Natural killer cell (primary cell): ENCODE measurements at regions of chr17 and their contacts with region 1.

Region 1: DNA sequence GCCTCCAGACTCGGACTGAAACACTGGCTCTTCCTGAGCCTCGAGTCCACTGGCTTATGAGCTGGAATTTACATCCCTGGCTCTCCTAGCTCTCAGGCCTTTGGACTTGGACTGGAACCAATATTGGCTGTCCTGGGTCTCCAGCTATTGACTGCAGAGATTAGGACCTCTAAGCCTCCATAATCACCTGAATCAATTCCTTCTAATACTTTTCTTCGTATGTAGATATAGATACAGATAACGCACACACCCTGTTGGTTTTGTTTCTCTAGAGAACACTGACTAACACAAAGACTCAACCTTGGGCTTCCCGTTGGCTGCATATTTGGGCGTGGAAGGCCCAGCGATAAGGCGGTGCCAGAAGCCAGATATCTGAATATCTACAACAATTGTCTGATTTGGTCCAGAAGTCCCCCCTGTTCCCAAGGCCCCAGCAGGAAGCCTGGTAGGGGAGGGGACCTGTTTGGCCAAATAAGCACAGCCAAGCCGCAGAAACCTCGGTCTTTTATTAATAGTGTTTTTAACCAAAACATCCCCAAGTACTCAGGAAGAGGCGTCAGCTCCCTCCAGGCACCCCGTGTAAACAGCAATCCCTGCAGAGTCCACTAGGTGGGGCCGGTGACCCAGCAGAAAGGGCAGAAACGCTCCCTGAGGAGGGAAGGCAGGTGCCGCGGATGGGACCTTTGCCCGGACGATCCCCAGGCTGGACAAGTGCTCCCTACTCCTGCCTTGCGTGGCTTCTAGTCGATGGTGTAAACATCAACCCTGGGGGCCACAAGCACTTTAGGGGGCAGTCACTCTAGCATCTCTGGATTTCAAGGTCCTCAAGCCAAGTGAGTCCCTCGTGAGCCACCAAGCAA is 57.0 kb downstream of the ABR start:
- DNase-seq: peak; percentile 83 to 86
- ATAC-seq: peak; percentile 31 to 65 (median 46)
- H3K4me3 ChIP-seq: no peak overlapping the region
- H3K4me3 Mint-ChIP-seq: peak overlapping the region; percentile 56
- H3K27ac ChIP-seq: peak overlapping the region; percentile 10
- H3K27ac Mint-ChIP-seq: peak overlapping the region; percentile 95 to 96
- H3K4me1 ChIP-seq: peaks cover 43% of the 10 kb centered on the region
- H3K4me1 Mint-ChIP-seq: peaks cover 35 to 37% of the 10 kb centered on the region in 2 donors
- H3K27me3 ChIP-seq: no peaks in the 10 kb centered on the region
- H3K27me3 Mint-ChIP-seq: peaks cover 0 to 4% of the 10 kb centered on the region in 2 donors
- CTCF ChIP-seq: peak; percentile 83

Region 2: DNA sequence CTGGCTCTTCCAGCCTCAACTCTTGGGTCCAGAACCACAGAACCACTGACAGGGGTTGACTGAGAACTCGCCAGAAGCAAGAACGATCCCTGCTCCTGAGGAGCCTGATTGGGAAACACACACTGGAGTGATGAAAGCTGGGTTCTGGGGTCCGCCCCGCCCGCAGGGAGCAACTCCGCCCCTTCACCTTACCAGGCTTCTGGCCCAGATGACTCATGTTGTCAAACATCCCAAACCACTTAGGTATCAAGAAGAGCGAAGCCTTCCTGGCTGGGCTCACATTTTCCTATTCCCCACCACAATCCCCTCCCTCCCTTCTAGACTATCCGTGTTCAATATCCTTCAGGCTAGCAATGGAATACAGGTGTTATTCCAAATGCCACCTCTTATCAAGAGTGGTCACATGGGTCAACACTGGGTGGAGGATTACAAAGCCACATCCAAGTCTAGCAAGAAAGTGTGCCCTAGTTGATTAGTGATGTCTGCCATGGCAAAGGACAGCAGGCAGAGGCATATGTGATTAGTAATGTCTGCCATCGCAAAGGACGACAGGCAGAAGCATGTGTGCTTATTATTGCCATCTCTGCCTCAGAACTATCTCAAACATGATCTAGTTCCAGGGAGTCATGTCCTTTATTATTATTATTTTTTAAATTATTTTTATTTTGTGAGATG is 55.3 kb before region 1 on chr17:
- intact Hi-C with region 1: no loop called
- DNase-seq: no peak
- ATAC-seq: no peak
- H3K4me3 ChIP-seq: no peak overlapping the region
- H3K4me3 Mint-ChIP-seq: no peak overlapping the region
- H3K27ac ChIP-seq: no peak overlapping the region
- H3K27ac Mint-ChIP-seq: no peak overlapping the region
- H3K4me1 ChIP-seq: no peaks in the 10 kb centered on the region
- H3K4me1 Mint-ChIP-seq: peaks cover 0 to 3% of the 10 kb centered on the region in 2 donors
- H3K27me3 ChIP-seq: no peaks in the 10 kb centered on the region
- H3K27me3 Mint-ChIP-seq: no peaks in the 10 kb centered on the region
- CTCF ChIP-seq: no peak

Region 3: DNA sequence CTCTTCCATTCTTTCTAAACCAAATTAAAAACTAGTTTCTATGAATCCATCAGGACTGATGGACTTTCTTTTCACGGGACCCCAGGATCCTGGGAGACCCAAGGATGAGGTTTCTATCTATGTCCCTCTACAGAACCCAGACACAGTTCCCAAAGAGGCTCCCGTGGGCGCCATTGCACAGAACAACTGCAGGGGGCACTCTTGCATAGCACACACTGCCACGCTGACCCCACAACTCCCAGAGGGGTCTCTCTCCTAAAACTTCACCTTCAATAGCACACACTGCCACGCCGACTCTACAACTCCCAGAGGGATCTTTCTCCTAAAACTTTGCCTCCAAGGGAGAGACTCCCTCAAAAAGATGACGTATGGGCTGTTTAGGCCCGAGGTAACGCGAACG is 48.0 kb after region 1 on chr17:
- intact Hi-C with region 1: no loop called
- DNase-seq: no peak
- ATAC-seq: no peak
- H3K4me3 ChIP-seq: no peak overlapping the region
- H3K4me3 Mint-ChIP-seq: no peak overlapping the region
- H3K27ac ChIP-seq: no peak overlapping the region
- H3K27ac Mint-ChIP-seq: no peak overlapping the region
- H3K4me1 ChIP-seq: no peaks in the 10 kb centered on the region
- H3K4me1 Mint-ChIP-seq: peaks cover 11 to 12% of the 10 kb centered on the region in 2 donors
- H3K27me3 ChIP-seq: no peaks in the 10 kb centered on the region
- H3K27me3 Mint-ChIP-seq: no peaks in the 10 kb centered on the region
- CTCF ChIP-seq: no peak

Region 4: DNA sequence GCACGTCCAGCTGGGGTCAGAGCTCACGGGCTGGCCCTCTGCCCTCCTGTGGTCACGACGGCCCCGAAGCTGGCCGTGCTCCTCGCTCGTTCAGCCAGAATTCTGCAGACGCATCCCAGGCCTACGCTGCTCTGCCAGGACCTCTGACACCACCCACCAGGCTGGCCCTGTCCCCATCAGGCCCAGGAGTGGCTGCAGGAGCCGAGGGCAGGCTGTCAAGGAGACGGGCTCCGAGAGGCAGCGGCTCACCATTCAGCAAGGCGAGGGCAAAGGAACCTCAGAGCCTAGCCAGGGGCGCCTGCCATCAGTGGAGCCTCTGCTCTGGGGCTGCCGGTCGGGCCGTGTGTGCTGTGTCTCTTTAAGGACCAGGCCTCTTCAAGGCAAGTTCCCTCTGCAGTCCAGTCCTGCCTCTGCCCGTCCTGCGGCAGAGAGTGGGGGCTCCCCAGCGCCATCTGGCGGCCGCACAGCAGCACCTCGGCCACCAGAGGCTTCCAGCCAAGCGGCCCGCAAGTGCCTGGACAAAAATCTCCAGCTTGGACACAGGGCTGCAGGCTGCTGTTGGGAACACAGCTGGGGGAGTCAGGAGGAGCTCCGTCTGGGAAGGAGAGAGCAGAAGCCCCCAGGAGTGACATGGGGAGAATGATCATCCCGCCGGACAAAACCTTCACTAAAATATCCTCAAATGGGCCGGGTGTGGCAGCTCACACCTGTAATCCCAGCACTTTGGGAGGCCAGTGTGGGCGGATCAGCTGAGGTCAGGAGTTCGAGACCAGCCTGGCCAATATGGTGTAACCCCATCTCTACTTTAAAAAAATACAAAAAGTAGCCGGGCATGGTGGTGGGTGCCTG is 64.4 kb after region 1 on chr17:
- intact Hi-C with region 1: loop called (anchors 1 kb)
- DNase-seq: peak; percentile 79 to 86
- ATAC-seq: peak; percentile 92 to 100 (median 99)
- H3K4me3 ChIP-seq: no peak overlapping the region
- H3K4me3 Mint-ChIP-seq: no peak overlapping the region
- H3K27ac ChIP-seq: no peak overlapping the region
- H3K27ac Mint-ChIP-seq: no peak overlapping the region
- H3K4me1 ChIP-seq: peaks cover 42% of the 10 kb centered on the region
- H3K4me1 Mint-ChIP-seq: peaks cover 11 to 15% of the 10 kb centered on the region in 2 donors
- H3K27me3 ChIP-seq: no peaks in the 10 kb centered on the region
- H3K27me3 Mint-ChIP-seq: no peaks in the 10 kb centered on the region
- CTCF ChIP-seq: peak; percentile 95

Region 5: GRCh38 chr17:1197781-1198490 is 75.2 kb after region 1 on chr17:
- intact Hi-C with region 1: loop called (anchors 2 kb)
- DNase-seq: peak; percentile 75 to 85
- ATAC-seq: peak; percentile 45 to 77 (median 69)
- H3K4me3 ChIP-seq: peak overlapping the region; percentile 1
- H3K4me3 Mint-ChIP-seq: peak overlapping the region; percentile 80
- H3K27ac ChIP-seq: peak overlapping the region; percentile 56
- H3K27ac Mint-ChIP-seq: peak overlapping the region; percentile 82 to 90
- H3K4me1 ChIP-seq: peaks cover 90% of the 10 kb centered on the region
- H3K4me1 Mint-ChIP-seq: peaks cover 58 to 68% of the 10 kb centered on the region in 2 donors
- H3K27me3 ChIP-seq: no peaks in the 10 kb centered on the region
- H3K27me3 Mint-ChIP-seq: no peaks in the 10 kb centered on the region
- CTCF ChIP-seq: no peak

Region 6: GRCh38 chr17:1251866-1252608 is 129.3 kb after region 1 on chr17:
- intact Hi-C with region 1: loop called (anchors 10 kb)
- DNase-seq: no peak
- ATAC-seq: no peak
- H3K4me3 ChIP-seq: no peak overlapping the region
- H3K4me3 Mint-ChIP-seq: no peak overlapping the region
- H3K27ac ChIP-seq: no peak overlapping the region
- H3K27ac Mint-ChIP-seq: no peak overlapping the region
- H3K4me1 ChIP-seq: peaks cover 31% of the 10 kb centered on the region
- H3K4me1 Mint-ChIP-seq: peaks cover 15% of the 10 kb centered on the region in 2 donors
- H3K27me3 ChIP-seq: no peaks in the 10 kb centered on the region
- H3K27me3 Mint-ChIP-seq: no peaks in the 10 kb centered on the region
- CTCF ChIP-seq: no peak

Region 7: DNA sequence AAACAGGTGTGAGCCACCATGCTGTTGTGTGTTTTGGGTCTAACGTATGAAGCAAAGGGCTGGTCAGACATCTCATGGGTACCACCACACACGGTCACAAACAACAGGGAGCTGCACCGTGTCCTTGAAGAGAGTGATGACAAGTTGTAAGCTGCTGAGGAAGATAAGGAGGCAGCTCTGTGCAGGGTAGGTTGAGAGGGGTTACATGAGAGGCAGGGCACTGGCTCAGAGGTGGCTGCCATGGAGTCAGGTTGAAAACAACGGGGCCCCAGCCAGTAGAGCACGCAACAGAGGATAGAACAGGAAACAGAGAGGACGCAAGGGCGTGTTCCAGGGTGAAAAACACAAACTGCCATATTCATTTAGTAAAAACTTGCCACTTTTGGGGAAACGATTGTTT is 208.9 kb after region 1 on chr17:
- intact Hi-C with region 1: loop called (anchors 5 kb)
- DNase-seq: peak in 1 of 2 donors; percentile 48
- ATAC-seq: peak in 1 of 3 donors; percentile 38
- H3K4me3 ChIP-seq: no peak overlapping the region
- H3K4me3 Mint-ChIP-seq: no peak overlapping the region
- H3K27ac ChIP-seq: no peak overlapping the region
- H3K27ac Mint-ChIP-seq: no peak overlapping the region
- H3K4me1 ChIP-seq: peaks cover 3% of the 10 kb centered on the region
- H3K4me1 Mint-ChIP-seq: peaks cover 12% of the 10 kb centered on the region in 2 donors
- H3K27me3 ChIP-seq: peaks cover 2% of the 10 kb centered on the region
- H3K27me3 Mint-ChIP-seq: no peaks in the 10 kb centered on the region
- CTCF ChIP-seq: no peak